GM10248 (cell line): ENCODE measurements at regions of chr6 and their contacts with region 1.

Region 1: DNA sequence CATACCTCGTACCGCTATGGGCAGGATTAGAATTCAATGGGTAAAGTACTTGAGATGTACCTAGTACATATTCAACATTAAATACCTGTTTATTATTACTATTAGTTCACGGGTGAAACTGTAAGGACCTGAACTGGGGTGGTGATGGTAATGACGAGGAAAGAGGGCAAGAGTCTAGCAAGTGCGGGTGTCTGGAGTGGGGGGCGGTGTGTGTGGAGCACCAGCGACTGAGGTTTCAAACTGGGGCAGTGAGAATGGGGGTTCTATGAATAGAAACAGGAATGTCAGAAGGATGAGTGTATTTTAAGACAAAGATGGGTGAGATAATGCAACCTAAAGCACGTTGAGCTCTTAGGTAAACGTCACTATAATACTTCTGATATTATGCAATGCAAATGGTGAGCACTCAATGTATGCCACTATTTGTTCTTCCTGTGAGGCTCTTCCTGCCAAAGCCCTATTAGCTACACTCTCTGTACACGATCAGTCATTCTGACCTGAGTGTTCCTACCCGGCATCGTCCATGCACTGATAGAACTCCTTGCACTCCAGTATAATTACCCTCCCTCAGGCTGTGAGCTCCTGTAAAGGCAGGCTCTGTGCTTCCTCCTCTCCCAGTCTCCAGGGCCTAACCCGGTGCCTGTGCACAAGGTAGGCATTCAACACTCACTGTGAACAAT is 55.0 kb downstream of the ALDH5A1 start:
- DNase-seq: no peak
- CTCF ChIP-seq: no peak

Region 2: GRCh38 chr6:24472177-24472576 is 77.6 kb before region 1 on chr6:
- CTCF ChIA-PET with region 1: no interaction called
- POLR2A ChIA-PET with region 1: no interaction called
- DNase-seq: no peak
- CTCF ChIP-seq: no peak

Region 3: DNA sequence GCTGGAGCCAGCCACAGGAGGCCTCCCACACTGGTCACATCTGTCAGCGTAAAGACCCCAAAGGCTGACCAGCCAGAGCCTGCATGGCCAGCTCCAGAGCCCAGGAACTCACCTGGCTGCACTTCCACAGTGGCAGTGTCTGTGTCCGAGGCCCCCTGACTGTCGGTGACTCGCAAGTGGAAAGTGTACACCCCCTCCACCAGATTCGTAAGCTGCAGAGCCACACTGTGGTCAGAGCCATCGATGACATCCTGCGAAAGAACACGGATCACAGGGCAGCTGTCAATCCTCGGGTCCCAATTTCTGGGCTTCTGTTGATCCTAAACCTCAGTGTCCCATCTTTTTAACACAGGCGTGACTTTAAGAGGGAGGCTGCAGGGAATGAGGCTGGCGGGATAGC is 14.3 kb after region 1 on chr6:
- CTCF ChIA-PET with region 1: interaction called, 14 read pairs
- POLR2A ChIA-PET with region 1: no interaction called
- DNase-seq: no peak
- CTCF ChIP-seq: no peak